ENCODE measurements at regions of chr14 and their contacts with region 1.

Region 1: GRCh38 chr14:55270832-55271565 is at the start of gene FBXO34:
- DNase-seq: peak; percentile 98 to 100 (median 100)
- ATAC-seq: peak; percentile 94
- H3K4me3 ChIP-seq: peak within 1 kb of the TSS; percentile 92 to 99
- H3K4me3 Mint-ChIP-seq: peak within 1 kb of the TSS; percentile 89
- H3K27ac ChIP-seq: peak within 1 kb of the TSS; percentile 71 to 85
- H3K27ac Mint-ChIP-seq: peak within 1 kb of the TSS; percentile 94
- H3K4me1 ChIP-seq: peaks cover 12% of the 10 kb centered on the region
- H3K4me1 Mint-ChIP-seq: peaks cover 39% of the 10 kb centered on the region
- H3K27me3 ChIP-seq: no peaks in the 10 kb centered on the region
- H3K27me3 Mint-ChIP-seq: no peaks in the 10 kb centered on the region
- CTCF ChIP-seq: peak; percentile 99
- total RNA-seq, gene FBXO34: 42.6 to 46.3 TPM

Region 2: DNA sequence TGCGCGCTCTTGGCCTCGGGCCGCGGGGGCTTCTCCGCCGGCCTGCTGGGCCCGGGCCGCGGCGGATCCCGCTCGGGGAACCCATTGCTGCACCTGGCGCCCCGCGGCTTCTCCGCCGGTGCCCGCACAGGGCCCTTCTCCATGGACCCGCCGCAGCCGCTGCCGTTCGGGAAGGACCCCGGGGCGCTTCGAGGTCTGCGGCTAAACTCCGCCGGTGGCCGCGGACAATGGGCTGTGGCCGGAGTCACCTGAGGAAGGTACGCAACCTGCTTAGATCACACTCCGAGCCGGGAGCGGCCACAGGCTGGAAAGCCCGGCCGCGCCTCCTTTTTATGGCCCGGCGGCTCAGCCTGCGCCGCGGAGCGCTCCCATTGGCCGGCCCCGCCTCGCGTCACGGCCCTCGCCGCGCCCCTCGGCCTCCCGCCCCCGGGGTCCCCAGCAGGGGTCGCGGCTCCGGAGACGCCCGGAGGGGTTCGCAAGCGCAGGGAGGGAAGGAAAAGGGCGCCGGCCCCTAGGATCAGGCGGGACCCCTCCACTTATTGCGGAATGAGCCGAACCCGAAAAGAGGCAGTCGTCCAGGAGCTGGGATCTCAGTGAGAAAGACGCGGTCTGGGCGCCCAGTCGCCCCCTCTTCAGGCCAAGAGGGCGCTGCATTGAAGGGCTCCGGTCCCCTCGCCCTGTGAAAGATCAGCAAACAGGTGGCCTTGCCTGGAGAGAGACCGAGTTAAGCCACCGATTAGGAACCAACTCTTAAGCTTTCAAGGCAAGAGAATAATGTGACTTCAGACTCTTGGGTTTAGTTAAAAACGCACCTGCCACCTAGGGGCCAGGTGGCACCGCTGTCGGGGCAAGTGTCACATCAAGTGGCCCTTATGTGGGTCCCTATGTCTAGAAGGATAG is 368.2 kb before region 1 on chr14 and contains the start of gene GCH1:
- CTCF ChIA-PET with region 1: no interaction called
- POLR2A ChIA-PET with region 1: no interaction called
- intact Hi-C with region 1: loop called (anchors 5 to 10 kb)
- DNase-seq: peak; percentile 51 to 91 (median 73)
- ATAC-seq: peak; percentile 73
- H3K4me3 ChIP-seq: peak within 1 kb of the TSS; percentile 95 to 98
- H3K4me3 Mint-ChIP-seq: peak within 1 kb of the TSS; percentile 92
- H3K27ac ChIP-seq: peak within 1 kb of the TSS; percentile 79 to 89
- H3K27ac Mint-ChIP-seq: peak within 1 kb of the TSS; percentile 91
- H3K4me1 ChIP-seq: peaks cover 11% of the 10 kb centered on the region
- H3K4me1 Mint-ChIP-seq: peaks cover 27% of the 10 kb centered on the region
- H3K27me3 ChIP-seq: no peaks in the 10 kb centered on the region
- H3K27me3 Mint-ChIP-seq: no peaks in the 10 kb centered on the region
- CTCF ChIP-seq: peak; percentile 61
- total RNA-seq, gene GCH1: 30.0 to 30.5 TPM

Region 3: DNA sequence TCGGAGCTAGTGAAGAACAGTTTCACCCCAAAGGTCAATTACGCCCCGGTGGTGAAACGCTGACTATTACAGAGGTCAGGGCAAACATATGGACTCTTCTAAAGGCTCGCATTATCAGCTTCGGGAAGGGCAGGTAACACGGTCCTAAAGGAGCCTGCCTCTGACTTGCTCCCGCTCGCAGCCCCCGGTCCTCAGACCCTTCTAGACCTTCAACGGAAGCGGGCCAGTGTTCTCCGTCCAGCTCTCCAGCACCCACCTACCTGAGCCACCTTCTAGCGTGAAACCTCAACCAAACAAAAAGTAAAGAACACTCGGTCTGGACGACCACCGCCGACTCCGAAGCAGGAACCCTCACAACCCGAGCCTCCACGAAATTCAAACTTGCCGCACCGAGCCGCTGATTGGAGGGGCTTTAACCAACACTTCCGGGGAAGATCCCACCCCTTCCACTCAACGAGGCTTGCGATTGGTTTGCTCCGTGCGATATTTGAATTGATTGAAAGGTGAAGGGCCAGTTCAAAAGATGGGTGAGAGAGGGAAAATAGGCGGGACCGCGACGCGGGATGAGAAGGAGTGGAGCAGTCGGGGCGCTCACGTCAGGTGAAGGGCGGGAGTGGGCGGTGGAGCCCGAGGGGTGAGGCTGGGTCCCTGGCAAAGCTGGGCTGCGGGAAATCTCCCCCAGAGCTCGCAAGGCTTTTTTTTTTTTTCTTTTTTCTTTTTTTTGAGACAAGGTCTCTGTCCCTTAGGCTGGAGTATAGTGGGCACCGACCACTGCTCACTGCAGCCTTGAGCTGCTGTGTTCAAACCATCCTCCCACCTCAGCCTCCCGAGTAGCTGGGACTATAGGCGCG is 79.6 kb before region 1 on chr14 and contains the start of gene DLGAP5:
- CTCF ChIA-PET with region 1: interaction called, 3 read pairs
- POLR2A ChIA-PET with region 1: no interaction called
- intact Hi-C with region 1: loop called (anchors 1 to 5 kb)
- DNase-seq: peak; percentile 71 to 96 (median 85)
- ATAC-seq: peak; percentile 98
- H3K4me3 ChIP-seq: peak within 1 kb of the TSS; percentile 66 to 76
- H3K4me3 Mint-ChIP-seq: peak within 1 kb of the TSS; percentile 92
- H3K27ac ChIP-seq: peak within 1 kb of the TSS; percentile 9 to 52
- H3K27ac Mint-ChIP-seq: peak within 1 kb of the TSS; percentile 22
- H3K4me1 ChIP-seq: peaks cover 11% of the 10 kb centered on the region
- H3K4me1 Mint-ChIP-seq: peaks cover 12% of the 10 kb centered on the region
- H3K27me3 ChIP-seq: no peaks in the 10 kb centered on the region
- H3K27me3 Mint-ChIP-seq: no peaks in the 10 kb centered on the region
- CTCF ChIP-seq: no peak
- total RNA-seq, gene DLGAP5: 0.54 TPM in 1 of 2 experiments, not detected in the other

Region 4: GRCh38 chr14:55333711-55334485 is 62.9 kb after region 1 on chr14:
- CTCF ChIA-PET with region 1: interaction called, 8 read pairs
- POLR2A ChIA-PET with region 1: interaction called, 4 read pairs
- intact Hi-C with region 1: loop called (anchors 1 to 5 kb)
- DNase-seq: peak in 2 of 9 experiments; percentile 33 to 58
- ATAC-seq: peak; percentile 10
- H3K4me3 ChIP-seq: peak overlapping the region in 1 of 2 experiments; percentile 2
- H3K4me3 Mint-ChIP-seq: peak overlapping the region; percentile 83
- H3K27ac ChIP-seq: peak overlapping the region; percentile 14 to 83
- H3K27ac Mint-ChIP-seq: peak overlapping the region; percentile 93
- H3K4me1 ChIP-seq: peaks cover 57% of the 10 kb centered on the region
- H3K4me1 Mint-ChIP-seq: peaks cover 76% of the 10 kb centered on the region
- H3K27me3 ChIP-seq: no peaks in the 10 kb centered on the region
- H3K27me3 Mint-ChIP-seq: no peaks in the 10 kb centered on the region
- CTCF ChIP-seq: no peak

Region 5: DNA sequence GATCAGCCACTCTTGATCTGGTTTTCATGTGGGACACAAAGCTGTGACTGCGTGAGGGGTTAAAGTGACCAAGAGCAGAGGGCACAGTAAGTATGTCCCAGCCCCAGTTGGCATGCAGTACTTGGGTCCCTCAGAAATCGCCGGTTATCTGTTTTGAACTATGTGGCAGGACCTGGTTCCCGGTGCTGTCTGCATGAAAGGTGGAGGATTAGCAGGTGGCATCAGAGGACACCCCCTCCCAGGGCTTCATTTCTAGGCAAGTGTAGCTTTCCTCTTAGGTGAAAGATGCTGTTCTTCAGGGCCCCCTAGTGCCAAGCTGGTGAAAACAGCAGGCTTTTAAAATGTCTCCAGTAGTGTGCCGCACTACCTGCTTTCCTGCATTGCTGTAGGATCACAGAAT is 83.5 kb after region 1 on chr14:
- CTCF ChIA-PET with region 1: interaction called, 60 read pairs
- POLR2A ChIA-PET with region 1: interaction called, 10 read pairs
- intact Hi-C with region 1: loop called (anchors 1 kb)
- DNase-seq: peak; percentile 31 to 82 (median 57)
- ATAC-seq: peak; percentile 92
- H3K4me3 ChIP-seq: no peak overlapping the region
- H3K4me3 Mint-ChIP-seq: peak overlapping the region; percentile 72
- H3K27ac ChIP-seq: peak overlapping the region in 1 of 2 experiments; percentile 64
- H3K27ac Mint-ChIP-seq: peak overlapping the region; percentile 93
- H3K4me1 ChIP-seq: no peaks in the 10 kb centered on the region
- H3K4me1 Mint-ChIP-seq: peaks cover 15% of the 10 kb centered on the region
- H3K27me3 ChIP-seq: no peaks in the 10 kb centered on the region
- H3K27me3 Mint-ChIP-seq: no peaks in the 10 kb centered on the region
- CTCF ChIP-seq: peak; percentile 59

Region 6: DNA sequence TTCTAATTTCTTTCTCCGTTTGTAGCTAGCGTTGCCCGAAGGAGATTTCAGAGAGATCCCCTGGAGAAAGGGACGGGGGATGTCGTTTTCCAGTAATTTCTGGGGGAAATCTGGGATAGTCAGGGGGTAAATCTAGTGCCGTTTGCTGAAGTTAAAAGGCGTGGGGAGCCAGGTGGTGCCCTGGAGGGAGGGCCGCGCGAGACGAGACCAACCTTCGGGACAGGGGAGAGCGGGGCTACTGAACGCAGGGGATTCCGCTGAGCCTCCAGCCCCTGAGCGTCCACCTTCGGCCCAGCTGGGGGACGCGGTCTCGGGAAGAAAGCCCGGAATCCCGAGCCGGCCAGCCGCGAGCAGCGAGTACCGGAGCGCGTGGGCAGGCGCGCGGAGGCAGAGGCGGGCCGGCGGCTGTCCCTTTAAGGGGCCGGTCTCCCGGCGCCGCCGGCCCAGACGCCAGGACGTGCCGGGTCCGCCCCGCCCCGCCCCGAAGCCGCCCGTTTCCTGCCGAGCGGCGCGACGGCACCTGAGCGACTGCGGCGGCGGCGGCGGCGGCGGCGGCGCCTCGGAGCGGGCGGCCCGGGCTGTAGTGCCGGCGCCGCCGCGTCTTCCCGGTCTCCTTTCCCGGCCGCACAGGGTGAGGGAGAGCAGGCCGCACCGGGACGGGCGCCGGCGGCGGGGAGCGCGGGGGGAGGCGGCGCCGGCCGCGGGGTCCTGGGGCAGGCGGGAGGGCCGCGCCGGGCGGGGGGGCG is 308.9 kb after region 1 on chr14 and contains the start of gene KTN1:
- CTCF ChIA-PET with region 1: interaction called, 4 read pairs
- POLR2A ChIA-PET with region 1: no interaction called
- intact Hi-C with region 1: loop called (anchors 5 kb)
- DNase-seq: peak; percentile 68 to 92 (median 84)
- ATAC-seq: peak; percentile 86
- H3K4me3 ChIP-seq: peak within 1 kb of the TSS; percentile 89 to 95
- H3K4me3 Mint-ChIP-seq: peak within 1 kb of the TSS; percentile 96
- H3K27ac ChIP-seq: peak within 1 kb of the TSS; percentile 77
- H3K27ac Mint-ChIP-seq: peak within 1 kb of the TSS; percentile 95
- H3K4me1 ChIP-seq: peaks cover 41% of the 10 kb centered on the region
- H3K4me1 Mint-ChIP-seq: peaks cover 30% of the 10 kb centered on the region
- H3K27me3 ChIP-seq: no peaks in the 10 kb centered on the region
- H3K27me3 Mint-ChIP-seq: no peaks in the 10 kb centered on the region
- CTCF ChIP-seq: no peak
- total RNA-seq, gene KTN1: 64.2 to 74.5 TPM

Region 7: GRCh38 chr14:57268161-57269069 is 1997.4 kb after region 1 on chr14 and contains the starts of genes AP5M1 and EXOC5:
- CTCF ChIA-PET with region 1: no interaction called
- POLR2A ChIA-PET with region 1: no interaction called
- intact Hi-C with region 1: loop called in 1 of 2 experiments (anchors 10 kb)
- DNase-seq: peak; percentile 80 to 97 (median 91)
- ATAC-seq: peak; percentile 80
- H3K4me3 ChIP-seq: peak within 1 kb of the TSS; percentile 77 to 84
- H3K4me3 Mint-ChIP-seq: peak within 1 kb of the TSS; percentile 99
- H3K27ac ChIP-seq: peak within 1 kb of the TSS; percentile 85 to 90
- H3K27ac Mint-ChIP-seq: peak within 1 kb of the TSS; percentile 100
- H3K4me1 ChIP-seq: peaks cover 35% of the 10 kb centered on the region
- H3K4me1 Mint-ChIP-seq: peaks cover 70% of the 10 kb centered on the region
- H3K27me3 ChIP-seq: no peaks in the 10 kb centered on the region
- H3K27me3 Mint-ChIP-seq: no peaks in the 10 kb centered on the region
- CTCF ChIP-seq: no peak
- total RNA-seq, gene AP5M1: 38.5 to 42.4 TPM
- total RNA-seq, gene EXOC5: 17.0 to 17.8 TPM

Measured in CD8-positive, alpha-beta T cell (primary cell).